GM12878 (cell line): ENCODE measurements at regions of chrX and their contacts with region 1.

Region 1: DNA sequence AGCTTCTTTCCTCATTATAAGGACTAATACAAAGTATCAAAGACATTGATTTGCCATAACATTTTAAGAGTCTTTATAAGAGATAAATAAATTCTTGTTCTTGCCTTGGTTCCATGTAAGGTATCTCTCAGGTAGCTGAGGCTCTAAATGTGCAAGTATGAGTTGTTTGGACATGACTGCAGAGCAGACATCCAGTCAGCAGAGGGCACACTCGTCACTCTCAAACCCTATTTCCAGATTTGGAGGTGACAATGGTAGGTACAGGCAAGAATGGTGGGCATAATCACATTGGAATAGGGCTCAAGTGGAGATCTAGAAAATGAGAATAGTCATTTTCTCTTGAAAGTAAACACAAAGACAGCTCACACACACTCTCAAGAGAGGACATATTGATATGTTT is 133.3 kb upstream of the ZIC3 start:
- DNase-seq: no peak
- ATAC-seq: peak; percentile 68
- H3K4me3 ChIP-seq: no peak overlapping the region
- H3K27ac ChIP-seq: no peak overlapping the region
- H3K4me1 ChIP-seq: no peaks in the 10 kb centered on the region
- H3K27me3 ChIP-seq: no peaks in the 10 kb centered on the region; a peak in 3 of 4 replicates
- CTCF ChIP-seq: peak; percentile 51 to 58 (median 52)
- EP300 ChIP-seq: no peak
- POLR2A ChIP-seq: no peak
- RAD21 ChIP-seq: peak; percentile 56

Region 2: GRCh38 chrX:137418099-137418498 is 14.5 kb before region 1 on chrX:
- CTCF ChIA-PET with region 1: interaction called, 5 read pairs
- POLR2A ChIA-PET with region 1: no interaction called
- RAD21 ChIA-PET with region 1: no interaction called
- SMC1A ChIA-PET with region 1: no interaction called
- in situ Hi-C with region 1: no loop called
- intact Hi-C with region 1: loop called (anchors 2 kb)
- DNase-seq: no peak
- ATAC-seq: no peak
- H3K4me3 ChIP-seq: no peak overlapping the region
- H3K27ac ChIP-seq: no peak overlapping the region
- H3K4me1 ChIP-seq: no peaks in the 10 kb centered on the region
- H3K27me3 ChIP-seq: no peaks in the 10 kb centered on the region
- CTCF ChIP-seq: no peak
- EP300 ChIP-seq: no peak
- POLR2A ChIP-seq: no peak
- RAD21 ChIP-seq: no peak

Region 3: GRCh38 chrX:137926090-137926489 is 493.5 kb after region 1 on chrX:
- CTCF ChIA-PET with region 1: interaction called, 7 read pairs
- POLR2A ChIA-PET with region 1: no interaction called
- RAD21 ChIA-PET with region 1: interaction called, 7 read pairs
- SMC1A ChIA-PET with region 1: interaction called, 5 read pairs
- in situ Hi-C with region 1: no loop called
- intact Hi-C with region 1: loop called (anchors 5 kb)
- DNase-seq: no peak
- ATAC-seq: 0 out of 3 replicates have a peak, but pooled peaks have one; percentile 38
- H3K4me3 ChIP-seq: no peak overlapping the region
- H3K27ac ChIP-seq: no peak overlapping the region
- H3K4me1 ChIP-seq: no peaks in the 10 kb centered on the region
- H3K27me3 ChIP-seq: no peaks in the 10 kb centered on the region
- CTCF ChIP-seq: peak in 2 of 3 experiments; percentile 19 to 34; a peak in 2 of 6 replicates
- EP300 ChIP-seq: no peak
- POLR2A ChIP-seq: no peak
- RAD21 ChIP-seq: 0 out of 2 replicates have a peak, but pooled peaks have one; percentile 28

Region 4: DNA sequence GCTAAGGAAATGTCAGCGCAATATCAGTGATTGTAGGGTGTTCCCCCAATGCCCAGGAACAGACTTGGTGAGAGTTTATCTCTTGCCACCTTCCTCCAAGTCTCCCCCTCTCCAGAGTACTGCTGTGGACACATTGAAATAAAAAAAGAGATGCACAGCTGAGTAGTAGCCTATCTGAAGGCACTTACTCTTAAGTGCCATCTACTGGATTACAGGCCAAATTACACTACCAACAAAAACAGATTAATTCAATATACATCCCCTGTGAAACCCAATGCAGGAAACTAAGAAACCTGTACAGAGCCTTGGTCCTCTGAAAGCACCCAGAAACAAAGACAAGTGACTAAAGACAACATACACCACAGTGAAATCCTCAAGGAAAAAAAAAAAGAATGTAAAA is 593.6 kb after region 1 on chrX:
- CTCF ChIA-PET with region 1: interaction called, 10 read pairs
- POLR2A ChIA-PET with region 1: no interaction called
- RAD21 ChIA-PET with region 1: no interaction called
- SMC1A ChIA-PET with region 1: interaction called, 6 read pairs
- in situ Hi-C with region 1: no loop called
- intact Hi-C with region 1: loop called (anchors 2 kb)
- DNase-seq: no peak
- ATAC-seq: peak; percentile 82
- H3K4me3 ChIP-seq: no peak overlapping the region
- H3K27ac ChIP-seq: no peak overlapping the region
- H3K4me1 ChIP-seq: no peaks in the 10 kb centered on the region
- H3K27me3 ChIP-seq: no peaks in the 10 kb centered on the region
- CTCF ChIP-seq: peak; percentile 46 to 52 (median 50); a peak in 4 of 6 replicates
- EP300 ChIP-seq: no peak
- POLR2A ChIP-seq: no peak
- RAD21 ChIP-seq: peak; percentile 34; the same call in 1 of the 2 replicates

Region 5: DNA sequence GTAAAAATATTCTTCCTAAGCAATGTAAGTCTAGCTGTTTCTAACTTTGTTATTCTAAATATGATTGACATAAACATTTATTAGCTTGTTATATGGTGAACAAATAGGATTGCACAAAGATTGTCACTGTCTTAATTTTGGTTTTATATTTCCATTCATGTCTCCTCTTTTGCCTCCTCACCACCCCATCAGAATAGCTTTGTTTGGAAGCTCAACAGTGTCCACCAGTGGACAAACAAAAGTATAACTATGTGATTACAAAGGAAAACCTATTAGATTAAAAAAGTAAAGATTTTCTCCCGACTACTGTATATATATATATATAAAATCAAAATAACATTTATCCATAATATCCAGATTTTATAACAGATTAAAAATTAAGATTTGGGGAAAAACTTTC is 601.5 kb after region 1 on chrX:
- CTCF ChIA-PET with region 1: interaction called, 13 read pairs
- POLR2A ChIA-PET with region 1: no interaction called
- RAD21 ChIA-PET with region 1: interaction called, 8 read pairs
- SMC1A ChIA-PET with region 1: no interaction called
- in situ Hi-C with region 1: no loop called
- intact Hi-C with region 1: no loop called
- DNase-seq: no peak
- ATAC-seq: no peak
- H3K4me3 ChIP-seq: no peak overlapping the region
- H3K27ac ChIP-seq: no peak overlapping the region
- H3K4me1 ChIP-seq: no peaks in the 10 kb centered on the region
- H3K27me3 ChIP-seq: no peaks in the 10 kb centered on the region
- CTCF ChIP-seq: peak in 1 of 3 experiments; percentile 14; a peak in 2 of 6 replicates
- EP300 ChIP-seq: no peak
- POLR2A ChIP-seq: no peak
- RAD21 ChIP-seq: peak; percentile 43